Mucosa of descending colon (tissue), 3 donors: ENCODE measurements at regions of chr1 and their contacts with region 1.

Region 1: GRCh38 chr1:46527474-46528296 is 23.8 kb downstream of the KNCN start:
- DNase-seq: peak; percentile 75 to 91 (median 87)
- ATAC-seq: peak; percentile 78
- H3K4me3 ChIP-seq: no peak overlapping the region
- H3K4me1 ChIP-seq: no peaks in the 10 kb centered on the region
- CTCF ChIP-seq: peak; percentile 70

Region 2: DNA sequence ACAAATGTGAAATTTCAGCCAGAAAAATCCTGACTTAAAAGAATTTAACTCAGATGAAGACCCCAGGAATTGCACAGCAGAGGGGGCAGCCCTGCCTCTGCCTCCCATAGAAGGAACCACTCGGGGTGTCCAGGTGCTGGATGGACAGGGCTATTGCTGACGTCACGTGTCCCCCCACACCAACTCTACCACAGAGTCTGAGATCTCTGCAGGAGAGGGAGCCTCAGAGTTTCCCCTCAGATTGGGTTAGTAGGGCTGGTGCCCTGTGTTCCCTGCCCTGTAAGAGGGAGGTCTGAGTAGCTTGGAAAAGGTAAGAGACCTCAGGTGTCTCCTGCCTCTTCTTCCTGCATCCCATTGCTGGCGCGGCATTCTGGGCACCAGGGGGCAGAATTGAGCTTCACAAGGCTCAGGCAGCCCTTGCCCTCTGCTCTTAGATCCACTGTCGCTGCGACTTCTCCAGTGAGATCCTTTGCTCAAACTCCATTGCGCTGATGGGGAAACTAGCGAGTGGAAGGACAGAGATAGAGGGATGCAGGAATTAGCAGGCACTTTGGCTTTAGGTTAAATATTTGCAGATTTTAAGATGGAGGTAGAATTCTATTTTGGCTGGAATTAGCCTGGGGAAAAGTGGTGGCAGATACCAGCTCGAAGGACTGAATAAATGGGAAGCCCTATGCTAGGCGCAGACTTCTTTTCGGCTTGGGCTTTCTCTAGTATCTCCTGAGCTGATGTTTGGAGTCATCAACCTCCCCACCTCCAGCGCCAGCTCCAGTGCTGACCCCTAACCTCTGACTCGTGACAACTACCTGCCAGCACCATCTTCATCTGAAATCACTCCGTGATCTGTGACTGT is 80.8 kb before region 1 on chr1:
- intact Hi-C with region 1: loop called (anchors 5 kb)
- DNase-seq: peak; percentile 73 to 94 (median 89)
- ATAC-seq: peak; percentile 72
- H3K4me3 ChIP-seq: no peak overlapping the region
- H3K4me1 ChIP-seq: peaks cover 11% of the 10 kb centered on the region
- CTCF ChIP-seq: peak; percentile 84

Region 3: DNA sequence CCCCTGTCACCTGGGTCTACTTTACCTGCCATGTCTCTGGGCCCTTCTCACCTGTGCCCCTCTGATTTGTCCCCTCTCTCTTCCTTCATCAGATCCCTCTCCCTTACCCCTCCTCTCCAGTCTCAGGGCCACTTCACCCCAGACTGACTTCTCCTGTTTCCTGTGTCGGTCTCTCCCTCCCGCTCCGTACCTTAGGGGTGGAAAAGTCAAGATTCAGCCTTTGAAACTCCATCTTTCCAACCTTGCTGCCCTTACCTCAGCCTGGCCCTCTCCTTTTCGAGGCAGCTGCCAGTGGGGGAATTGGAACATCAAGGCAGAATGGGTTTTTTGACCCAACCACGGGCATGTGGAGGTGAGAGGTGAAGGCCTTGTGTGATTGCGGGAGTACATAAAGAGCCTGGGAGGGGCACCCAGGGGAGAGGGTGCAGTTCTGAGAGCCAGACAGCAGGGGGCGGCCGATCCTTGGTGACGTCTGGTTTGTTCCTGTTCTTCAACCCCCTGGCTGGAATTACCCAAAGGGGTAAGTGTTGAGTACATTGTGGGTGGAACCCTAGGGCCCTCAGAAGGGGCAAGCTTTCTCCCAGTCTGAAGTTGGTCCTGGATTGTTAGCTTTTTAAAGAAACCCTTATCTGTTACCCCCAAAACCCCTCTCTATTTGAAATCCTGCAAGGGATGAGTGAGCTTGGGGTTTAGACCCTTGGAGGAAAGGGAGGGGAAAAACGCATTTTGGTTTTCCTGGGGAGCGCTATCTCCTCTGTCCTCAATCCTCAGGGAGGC is 50.3 kb before region 1 on chr1:
- intact Hi-C with region 1: loop called (anchors 2 to 10 kb)
- DNase-seq: peak; percentile 67 to 86 (median 85)
- ATAC-seq: peak; percentile 95
- H3K4me3 ChIP-seq: no peak overlapping the region
- H3K4me1 ChIP-seq: no peaks in the 10 kb centered on the region
- CTCF ChIP-seq: peak; percentile 87

Region 4: GRCh38 chr1:46724991-46725735 is 197.5 kb after region 1 on chr1:
- intact Hi-C with region 1: loop called in 1 of 2 experiments (anchors 5 kb)
- DNase-seq: peak; percentile 44 to 88 (median 63)
- ATAC-seq: peak; percentile 97
- H3K4me3 ChIP-seq: no peak overlapping the region
- H3K4me1 ChIP-seq: no peaks in the 10 kb centered on the region
- CTCF ChIP-seq: peak; percentile 58